SK-N-SH (cell line): ENCODE measurements at regions of chr18 and their contacts with region 1.

Region 1: DNA sequence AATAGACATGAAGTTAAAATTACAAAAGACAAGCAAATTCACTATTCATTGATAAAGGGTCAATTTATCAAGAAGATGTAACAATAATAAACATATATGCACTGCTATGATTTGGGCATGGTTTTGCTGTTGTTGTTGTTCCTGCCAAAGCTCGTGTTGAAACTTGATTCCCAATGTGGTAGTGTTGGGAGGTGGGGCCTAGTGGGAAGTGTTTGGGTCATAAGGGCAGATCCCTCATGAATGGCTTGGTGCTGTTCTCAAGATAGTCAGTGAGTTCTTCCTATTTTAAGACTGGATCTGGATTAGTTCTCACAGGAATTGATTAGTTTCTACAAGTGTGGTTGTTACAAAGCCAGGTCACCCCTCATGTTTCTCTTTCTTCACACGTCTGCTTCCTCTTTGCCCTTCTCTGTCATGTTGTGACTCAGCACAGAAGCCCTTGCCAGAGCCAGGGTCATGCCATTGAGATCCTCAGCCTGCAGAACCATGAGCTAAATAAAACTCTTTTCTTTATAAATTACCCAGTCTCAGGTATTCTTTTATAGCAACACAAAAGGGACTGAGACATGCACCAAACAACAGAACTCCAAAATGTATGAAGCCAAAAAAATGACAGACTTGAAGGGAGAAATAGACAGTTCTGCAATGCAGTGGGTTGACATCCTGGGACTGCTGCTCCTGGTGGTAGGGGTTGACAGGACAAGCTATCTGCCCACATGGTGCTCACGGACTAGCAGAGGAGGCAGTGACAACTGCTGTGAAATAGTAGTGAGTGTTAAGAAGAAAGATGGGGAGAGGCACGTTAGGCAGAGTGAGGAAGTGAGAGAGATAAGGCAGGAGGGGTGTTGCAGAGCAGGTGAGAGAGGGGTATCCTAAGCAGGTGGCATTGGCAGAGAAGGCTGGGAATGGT is 18.6 kb upstream of the SKA1 start:
- DNase-seq: no peak
- H3K4me3 ChIP-seq: no peak overlapping the region
- H3K27ac ChIP-seq: no peak overlapping the region
- H3K4me1 ChIP-seq: peaks cover 0 to 4% of the 10 kb centered on the region in 2 experiments; a peak in 2 of 4 replicates
- H3K27me3 ChIP-seq: peaks cover 6% of the 10 kb centered on the region; the same call in 1 of the 2 replicates
- CTCF ChIP-seq: no peak
- EP300 ChIP-seq: no peak
- RAD21 ChIP-seq: no peak

Region 2: DNA sequence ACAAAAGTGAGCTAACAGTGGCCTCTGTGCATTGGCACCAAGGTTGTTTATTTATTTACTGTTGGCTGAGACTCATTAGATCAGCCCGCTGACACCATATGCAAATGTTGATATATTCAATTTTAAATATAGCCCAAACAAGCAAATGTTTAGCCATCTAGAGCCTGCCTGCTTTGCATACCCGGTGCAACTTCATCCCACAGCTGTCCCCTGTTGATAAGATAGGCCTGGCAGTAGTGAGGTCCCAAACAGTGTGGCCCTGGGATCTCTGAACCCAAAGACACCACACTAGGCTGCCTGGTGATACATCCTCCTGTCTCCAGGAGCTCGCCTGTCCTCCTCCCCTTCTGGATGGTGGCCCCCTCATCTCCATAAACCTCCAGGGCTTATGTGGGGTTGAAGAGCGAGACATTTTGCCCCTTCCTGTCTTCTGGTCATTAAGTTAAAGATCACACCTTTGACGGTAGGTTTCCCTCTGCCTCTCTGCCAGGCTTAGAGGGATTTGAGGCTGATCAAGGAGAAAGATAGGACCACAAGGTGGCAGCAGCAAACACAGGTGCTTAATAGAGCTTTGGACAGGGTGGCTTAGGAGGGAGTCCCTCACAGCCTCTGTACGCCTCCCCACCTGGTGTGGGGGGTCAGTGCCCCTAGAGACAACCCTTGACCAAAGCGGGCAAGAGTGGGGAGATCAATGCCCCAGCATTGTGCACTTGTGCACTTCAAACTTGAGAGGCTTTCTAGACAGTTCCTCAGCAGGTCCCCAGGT is 137.7 kb before region 1 on chr18:
- CTCF ChIA-PET with region 1: interaction called, 38 read pairs
- POLR2A ChIA-PET with region 1: no interaction called
- DNase-seq: no peak
- H3K4me3 ChIP-seq: no peak overlapping the region
- H3K27ac ChIP-seq: no peak overlapping the region
- H3K4me1 ChIP-seq: no peaks in the 10 kb centered on the region
- H3K27me3 ChIP-seq: peaks cover 6% of the 10 kb centered on the region
- CTCF ChIP-seq: peak; percentile 45
- EP300 ChIP-seq: no peak
- RAD21 ChIP-seq: peak; percentile 29

Region 3: DNA sequence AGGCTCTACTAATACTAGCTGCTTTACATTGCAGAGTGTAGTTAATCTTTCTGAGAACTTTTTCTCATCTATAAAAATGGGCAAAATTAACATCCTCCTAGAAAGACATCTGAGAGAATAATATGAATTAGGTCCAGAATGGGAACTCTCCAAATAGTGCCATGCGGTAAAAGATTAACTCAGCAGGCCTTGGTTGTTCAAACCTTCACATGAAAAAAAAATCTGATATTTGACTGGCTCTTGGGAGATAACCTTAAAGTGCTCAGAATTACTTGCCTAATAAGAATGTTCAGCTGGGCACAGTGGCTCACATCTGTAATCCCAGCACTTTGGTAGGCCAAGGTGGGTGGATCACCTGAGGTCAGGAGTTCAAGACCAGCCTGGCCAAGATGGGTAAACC is 63.3 kb before region 1 on chr18:
- CTCF ChIA-PET with region 1: interaction called, 12 read pairs
- POLR2A ChIA-PET with region 1: interaction called, 3 read pairs
- DNase-seq: no peak
- H3K4me3 ChIP-seq: no peak overlapping the region
- H3K27ac ChIP-seq: no peak overlapping the region
- H3K4me1 ChIP-seq: peaks cover 0 to 3% of the 10 kb centered on the region in 2 experiments; a peak in 1 of 4 replicates
- H3K27me3 ChIP-seq: no peaks in the 10 kb centered on the region
- CTCF ChIP-seq: no peak
- EP300 ChIP-seq: no peak
- RAD21 ChIP-seq: no peak

Region 4: DNA sequence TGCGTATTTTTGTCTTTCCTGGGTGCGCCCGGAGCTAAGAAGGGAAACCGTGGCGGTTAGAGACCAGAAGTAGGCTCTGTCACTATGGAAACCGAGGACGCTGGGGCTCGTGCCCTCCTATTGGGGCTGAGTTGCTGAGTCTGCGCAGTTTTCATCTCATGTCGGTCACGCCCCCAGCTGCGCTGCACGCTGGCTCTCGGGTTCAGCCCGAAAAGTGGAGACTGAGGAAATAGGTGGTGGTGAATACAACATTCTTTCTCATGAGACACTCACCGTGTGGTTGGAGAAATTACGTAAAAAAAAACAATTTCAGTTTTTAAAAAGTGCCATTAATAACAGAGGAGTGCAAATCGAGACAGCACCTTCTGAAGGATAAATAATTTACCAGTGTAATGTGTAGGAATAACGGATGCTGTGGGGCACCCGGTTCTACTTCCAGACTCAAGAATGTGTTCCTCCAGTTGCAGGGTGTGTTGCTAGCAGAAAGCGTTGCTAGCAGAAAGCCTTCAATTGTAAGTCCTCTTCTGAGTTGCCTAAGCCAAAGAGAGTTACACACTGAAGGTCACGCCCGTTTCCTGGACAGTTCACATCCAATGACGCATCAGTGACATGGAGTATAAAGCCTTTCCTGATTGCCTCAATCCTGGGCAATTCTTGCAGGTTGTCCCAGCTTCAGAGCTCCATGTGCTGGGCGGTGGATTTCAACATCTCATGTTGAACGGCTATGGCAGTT is 48.4 kb before region 1 on chr18:
- CTCF ChIA-PET with region 1: interaction called, 11 read pairs
- POLR2A ChIA-PET with region 1: no interaction called
- DNase-seq: peak; percentile 94
- H3K4me3 ChIP-seq: peak overlapping the region; percentile 59 to 60
- H3K27ac ChIP-seq: no peak overlapping the region; a peak in 1 of 4 replicates
- H3K4me1 ChIP-seq: peaks cover 0 to 8% of the 10 kb centered on the region in 2 experiments; a peak in 1 of 4 replicates
- H3K27me3 ChIP-seq: peaks cover 6% of the 10 kb centered on the region; the same call in 1 of the 2 replicates
- CTCF ChIP-seq: no peak
- EP300 ChIP-seq: no peak
- RAD21 ChIP-seq: no peak

Region 5: GRCh38 chr18:50338122-50338521 is 18.2 kb before region 1 on chr18:
- CTCF ChIA-PET with region 1: interaction called, 14 read pairs
- POLR2A ChIA-PET with region 1: no interaction called
- DNase-seq: peak; percentile 34
- H3K4me3 ChIP-seq: no peak overlapping the region
- H3K27ac ChIP-seq: no peak overlapping the region; a peak in 1 of 4 replicates
- H3K4me1 ChIP-seq: peaks cover 0 to 18% of the 10 kb centered on the region in 2 experiments; a peak in 1 of 4 replicates
- H3K27me3 ChIP-seq: no peaks in the 10 kb centered on the region
- CTCF ChIP-seq: no peak
- EP300 ChIP-seq: no peak
- RAD21 ChIP-seq: no peak

Region 6: DNA sequence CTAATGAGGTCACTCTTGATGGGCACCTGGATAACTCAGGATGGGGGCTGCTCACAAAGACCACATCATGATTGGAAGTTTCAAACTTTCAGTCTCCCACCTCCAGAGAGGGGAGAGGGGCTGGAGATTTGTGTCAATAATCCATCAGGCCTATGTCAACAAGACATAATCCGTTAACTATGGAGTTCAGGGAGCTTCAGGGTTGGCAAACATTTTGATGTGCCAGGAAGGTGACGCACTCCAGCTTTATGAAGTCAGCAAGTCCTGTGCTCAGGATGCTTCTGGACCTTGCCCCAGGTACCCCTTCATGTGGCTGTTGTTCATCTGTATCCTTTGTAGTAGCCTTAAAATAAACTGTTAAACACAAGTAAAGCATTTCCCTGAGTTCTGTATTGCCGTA is 37.5 kb after region 1 on chr18:
- CTCF ChIA-PET with region 1: no interaction called
- POLR2A ChIA-PET with region 1: no interaction called
- DNase-seq: no peak
- H3K4me3 ChIP-seq: no peak overlapping the region
- H3K27ac ChIP-seq: no peak overlapping the region
- H3K4me1 ChIP-seq: no peaks in the 10 kb centered on the region; a peak in 2 of 4 replicates
- H3K27me3 ChIP-seq: no peaks in the 10 kb centered on the region
- CTCF ChIP-seq: no peak
- EP300 ChIP-seq: no peak
- RAD21 ChIP-seq: no peak

Region 7: GRCh38 chr18:50429207-50429948 is 73.1 kb after region 1 on chr18:
- CTCF ChIA-PET with region 1: interaction called, 18 read pairs
- POLR2A ChIA-PET with region 1: no interaction called
- DNase-seq: peak; percentile 37
- H3K4me3 ChIP-seq: no peak overlapping the region
- H3K27ac ChIP-seq: no peak overlapping the region
- H3K4me1 ChIP-seq: no peaks in the 10 kb centered on the region
- H3K27me3 ChIP-seq: no peaks in the 10 kb centered on the region
- CTCF ChIP-seq: peak; percentile 57
- EP300 ChIP-seq: no peak
- RAD21 ChIP-seq: peak; percentile 59